ENCODE measurements at regions of chr10 and their contacts with region 1.

Region 1: DNA sequence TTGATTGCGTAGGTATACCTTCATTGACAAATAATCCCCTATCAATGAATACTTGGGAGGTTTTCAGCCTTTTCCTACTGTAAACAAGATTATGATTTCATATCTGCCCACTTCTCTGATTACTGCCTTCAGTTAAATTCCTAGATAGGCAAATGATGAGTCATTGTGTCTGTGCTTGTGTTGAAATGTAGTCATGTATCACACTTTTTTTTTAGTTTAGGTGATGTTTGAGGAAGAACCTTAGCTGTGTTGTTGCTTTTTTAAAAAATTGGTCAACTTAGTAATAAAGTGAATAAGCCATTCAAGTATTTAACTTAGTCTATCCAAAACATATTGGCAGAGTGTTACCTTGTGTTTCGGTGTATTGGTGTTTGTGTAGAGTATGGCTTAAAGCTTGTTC is 60.0 kb downstream of the WAC start:
- DNase-seq: no peak
- ATAC-seq: no peak
- H3K4me3 ChIP-seq: no peak overlapping the region
- H3K4me3 Mint-ChIP-seq: no peak overlapping the region
- H3K27ac ChIP-seq: no peak overlapping the region
- H3K27ac Mint-ChIP-seq: peak overlapping the region; percentile 6
- H3K4me1 ChIP-seq: peaks cover 23% of the 10 kb centered on the region
- H3K4me1 Mint-ChIP-seq: peaks cover 58% of the 10 kb centered on the region
- H3K27me3 ChIP-seq: no peaks in the 10 kb centered on the region
- H3K27me3 Mint-ChIP-seq: no peaks in the 10 kb centered on the region
- CTCF ChIP-seq: no peak

Region 2: DNA sequence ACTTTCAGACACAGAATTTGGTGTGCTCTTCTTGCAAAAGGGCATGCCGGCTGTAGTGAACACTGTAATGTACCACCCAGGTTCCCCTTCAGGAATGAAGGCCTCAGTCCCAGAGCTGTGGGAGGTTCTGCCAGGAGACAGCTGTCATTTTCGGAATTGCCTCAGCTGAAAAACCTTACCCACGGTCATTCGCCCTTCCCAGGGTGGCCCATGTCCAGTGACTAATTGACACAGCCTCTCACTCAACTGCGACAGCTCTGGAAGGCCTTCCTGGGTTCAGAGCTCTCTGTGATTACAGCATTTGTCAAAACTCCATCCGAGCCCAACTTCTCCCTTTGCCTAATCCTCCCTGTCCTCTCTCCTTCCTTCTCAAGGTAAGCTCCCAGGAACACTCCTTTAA is 103.7 kb before region 1 on chr10:
- CTCF ChIA-PET with region 1: no interaction called
- POLR2A ChIA-PET with region 1: no interaction called
- intact Hi-C with region 1: no loop called
- DNase-seq: no peak
- ATAC-seq: no peak
- H3K4me3 ChIP-seq: no peak overlapping the region
- H3K4me3 Mint-ChIP-seq: no peak overlapping the region
- H3K27ac ChIP-seq: no peak overlapping the region
- H3K27ac Mint-ChIP-seq: no peak overlapping the region
- H3K4me1 ChIP-seq: no peaks in the 10 kb centered on the region
- H3K4me1 Mint-ChIP-seq: peaks cover 6% of the 10 kb centered on the region
- H3K27me3 ChIP-seq: peaks cover 0 to 3% of the 10 kb centered on the region in 2 experiments
- H3K27me3 Mint-ChIP-seq: peaks cover 12% of the 10 kb centered on the region
- CTCF ChIP-seq: no peak

Region 3: GRCh38 chr10:28558923-28559508 is 33.9 kb before region 1 on chr10:
- CTCF ChIA-PET with region 1: no interaction called
- POLR2A ChIA-PET with region 1: no interaction called
- intact Hi-C with region 1: loop called in 1 of 2 experiments (anchors 5 kb)
- DNase-seq: no peak
- ATAC-seq: no peak
- H3K4me3 ChIP-seq: no peak overlapping the region
- H3K4me3 Mint-ChIP-seq: no peak overlapping the region
- H3K27ac ChIP-seq: no peak overlapping the region
- H3K27ac Mint-ChIP-seq: no peak overlapping the region
- H3K4me1 ChIP-seq: peaks cover 71% of the 10 kb centered on the region
- H3K4me1 Mint-ChIP-seq: peaks cover 84% of the 10 kb centered on the region
- H3K27me3 ChIP-seq: no peaks in the 10 kb centered on the region
- H3K27me3 Mint-ChIP-seq: no peaks in the 10 kb centered on the region
- CTCF ChIP-seq: no peak

Region 4: GRCh38 chr10:28612877-28613276 is 19.9 kb after region 1 on chr10:
- CTCF ChIA-PET with region 1: no interaction called
- POLR2A ChIA-PET with region 1: no interaction called
- intact Hi-C with region 1: loop called in 1 of 2 experiments (anchors 2 kb)
- DNase-seq: no peak
- ATAC-seq: no peak
- H3K4me3 ChIP-seq: no peak overlapping the region
- H3K4me3 Mint-ChIP-seq: no peak overlapping the region
- H3K27ac ChIP-seq: no peak overlapping the region
- H3K27ac Mint-ChIP-seq: peak overlapping the region; percentile 37
- H3K4me1 ChIP-seq: no peaks in the 10 kb centered on the region
- H3K4me1 Mint-ChIP-seq: peaks cover 16% of the 10 kb centered on the region
- H3K27me3 ChIP-seq: no peaks in the 10 kb centered on the region
- H3K27me3 Mint-ChIP-seq: no peaks in the 10 kb centered on the region
- CTCF ChIP-seq: no peak

Region 5: DNA sequence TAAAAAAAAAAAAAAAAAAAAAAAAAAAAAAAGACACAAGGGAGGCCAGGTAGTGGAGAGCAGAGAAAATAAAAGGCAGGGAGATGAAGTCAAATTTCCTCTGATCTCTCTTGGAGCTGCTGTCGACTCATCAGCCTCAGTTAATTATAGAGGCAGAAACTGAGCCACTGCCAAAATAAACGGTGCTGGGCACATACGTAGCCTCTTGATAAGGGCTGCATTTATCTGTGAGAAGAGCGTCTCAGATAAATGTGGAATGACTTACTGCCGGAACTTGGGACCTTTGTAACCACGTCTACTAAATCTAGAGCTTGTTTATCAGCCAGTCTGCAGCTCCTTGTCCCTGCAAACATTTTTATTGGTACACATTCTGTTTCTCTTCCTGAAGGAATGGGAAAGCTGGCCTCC is 246.7 kb after region 1 on chr10:
- CTCF ChIA-PET with region 1: no interaction called
- POLR2A ChIA-PET with region 1: no interaction called
- intact Hi-C with region 1: no loop called
- DNase-seq: no peak
- ATAC-seq: no peak
- H3K4me3 ChIP-seq: no peak overlapping the region
- H3K4me3 Mint-ChIP-seq: no peak overlapping the region
- H3K27ac ChIP-seq: no peak overlapping the region
- H3K27ac Mint-ChIP-seq: no peak overlapping the region
- H3K4me1 ChIP-seq: no peaks in the 10 kb centered on the region
- H3K4me1 Mint-ChIP-seq: no peaks in the 10 kb centered on the region
- H3K27me3 ChIP-seq: peaks cover 0 to 3% of the 10 kb centered on the region in 2 experiments
- H3K27me3 Mint-ChIP-seq: peaks cover 9% of the 10 kb centered on the region
- CTCF ChIP-seq: no peak

Measured in CD8-positive, alpha-beta T cell (primary cell).